Aorta (tissue), 5 donors: ENCODE measurements at regions of chrX and their contacts with region 1.

Region 1: DNA sequence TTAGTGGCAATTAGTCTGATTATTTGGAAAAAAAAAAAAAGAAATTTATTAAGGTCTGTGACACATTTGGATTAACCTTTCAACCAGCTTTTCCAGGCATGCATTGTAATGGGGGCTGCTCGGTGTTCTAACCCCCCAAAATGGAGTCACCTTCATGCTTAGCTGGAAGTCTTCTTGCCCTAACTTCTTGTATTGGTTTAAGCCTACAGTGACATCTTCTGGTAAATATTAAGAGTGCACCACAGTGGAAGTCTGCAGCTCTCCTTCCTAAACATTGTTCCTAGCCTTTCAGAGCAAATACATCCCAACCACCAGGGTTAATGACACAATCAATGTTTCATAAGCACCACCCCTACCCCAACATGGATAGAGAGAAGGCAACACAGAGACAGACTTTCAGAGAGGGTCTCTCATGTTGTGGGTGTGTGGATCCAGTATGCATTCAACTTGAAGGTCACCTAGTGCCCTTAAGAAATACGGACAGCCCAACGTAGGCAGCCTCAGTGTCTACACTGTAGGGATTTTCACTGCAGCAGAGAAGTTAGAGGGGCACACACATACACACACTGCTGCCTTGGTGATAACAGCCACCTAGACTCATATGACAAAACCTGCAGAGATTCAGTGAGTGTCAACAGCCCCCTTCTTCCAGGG is 142.9 kb upstream of the MBNL3 start:
- DNase-seq: no peak
- ATAC-seq: no peak
- H3K4me3 ChIP-seq: no peak overlapping the region
- H3K27ac ChIP-seq: no peak overlapping the region
- H3K4me1 ChIP-seq: no peaks in the 10 kb centered on the region
- H3K27me3 ChIP-seq: no peaks in the 10 kb centered on the region

Region 2: DNA sequence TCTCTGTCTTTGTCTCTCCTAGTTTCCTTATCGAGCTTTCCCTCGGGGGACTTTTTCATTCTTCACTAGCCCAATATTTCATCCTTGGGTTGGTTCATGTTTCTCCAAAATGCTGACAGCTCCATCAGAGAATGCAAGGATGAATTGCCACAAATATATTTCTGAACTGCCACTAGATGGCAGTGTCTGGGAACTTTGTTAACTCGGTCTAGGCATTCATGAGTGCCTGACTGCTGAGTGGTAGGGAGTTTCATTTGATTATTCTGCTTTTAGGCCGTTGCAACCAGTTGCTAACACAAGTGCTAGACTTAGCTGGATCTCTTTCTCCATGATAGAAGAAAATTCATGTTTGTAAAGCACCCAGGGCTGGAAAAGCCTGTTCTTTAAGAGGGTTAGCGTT is 338.9 kb before region 1 on chrX:
- intact Hi-C with region 1: loop called (anchors 5 kb)
- DNase-seq: no peak
- ATAC-seq: no peak
- H3K4me3 ChIP-seq: no peak overlapping the region
- H3K27ac ChIP-seq: no peak overlapping the region
- H3K4me1 ChIP-seq: no peaks in the 10 kb centered on the region
- H3K27me3 ChIP-seq: no peaks in the 10 kb centered on the region

Region 3: GRCh38 chrX:132520213-132520612 is 111.5 kb before region 1 on chrX:
- intact Hi-C with region 1: no loop called
- DNase-seq: no peak
- ATAC-seq: no peak
- H3K4me3 ChIP-seq: no peak overlapping the region
- H3K27ac ChIP-seq: no peak overlapping the region
- H3K4me1 ChIP-seq: no peaks in the 10 kb centered on the region
- H3K27me3 ChIP-seq: no peaks in the 10 kb centered on the region